ENCODE measurements at regions of chr4 and their contacts with region 1.

Region 1: GRCh38 chr4:102610007-102610406 is 108.8 kb downstream of the NFKB1 start:
- DNase-seq: no peak
- H3K4me3 ChIP-seq: no peak overlapping the region
- H3K4me3 Mint-ChIP-seq: peak overlapping the region in 5 of 8 donors; percentile 1 to 83 (median 44)
- H3K27ac ChIP-seq: no peak overlapping the region
- H3K27ac Mint-ChIP-seq: peak overlapping the region; percentile 18 to 99 (median 94)
- H3K4me1 ChIP-seq: peaks cover 84% of the 10 kb centered on the region
- H3K4me1 Mint-ChIP-seq: peaks cover 54 to 95% (median 76%) of the 10 kb centered on the region in 4 donors
- H3K27me3 ChIP-seq: no peaks in the 10 kb centered on the region
- H3K27me3 Mint-ChIP-seq: no peaks in the 10 kb centered on the region

Region 2: DNA sequence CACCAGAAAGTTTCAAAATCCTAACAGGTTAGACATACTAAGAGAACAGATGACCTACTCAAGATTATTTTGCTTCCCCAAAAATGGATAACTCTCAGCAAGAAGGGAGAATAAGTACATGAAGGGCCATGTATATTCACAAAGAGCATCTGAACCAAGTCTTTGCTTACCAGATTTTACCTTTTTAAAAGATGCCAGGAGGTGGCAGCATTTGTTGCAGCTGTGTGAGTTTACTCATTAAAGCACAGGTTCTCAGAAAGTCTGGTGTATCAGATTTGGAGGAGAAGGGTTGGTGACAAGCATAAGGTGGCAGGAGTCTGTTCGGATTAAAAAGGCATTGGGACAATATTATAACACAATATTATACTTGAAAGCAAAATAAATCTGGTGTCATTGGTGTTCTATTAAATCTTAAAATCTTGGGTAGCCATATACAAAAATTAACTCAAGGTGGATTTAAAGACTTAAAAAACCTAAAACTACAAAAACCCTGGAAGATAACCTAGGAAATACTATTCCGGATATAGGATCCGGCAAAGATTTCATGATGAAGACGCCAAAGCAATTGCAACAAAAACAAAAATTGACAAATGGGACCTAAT is 160.2 kb before region 1 on chr4:
- CTCF ChIA-PET with region 1: interaction called, 7 read pairs
- POLR2A ChIA-PET with region 1: no interaction called
- intact Hi-C with region 1: loop called (anchors 5 kb)
- DNase-seq: peak; percentile 67 to 75 (median 68)
- H3K4me3 ChIP-seq: no peak overlapping the region
- H3K4me3 Mint-ChIP-seq: no peak overlapping the region
- H3K27ac ChIP-seq: no peak overlapping the region
- H3K27ac Mint-ChIP-seq: no peak overlapping the region
- H3K4me1 ChIP-seq: peaks cover 12% of the 10 kb centered on the region
- H3K4me1 Mint-ChIP-seq: peaks cover 5 to 21% (median 9%) of the 10 kb centered on the region in 4 donors
- H3K27me3 ChIP-seq: no peaks in the 10 kb centered on the region
- H3K27me3 Mint-ChIP-seq: no peaks in the 10 kb centered on the region

Region 3: GRCh38 chr4:102578819-102579218 is 31.2 kb before region 1 on chr4:
- CTCF ChIA-PET with region 1: interaction called, 9 read pairs
- POLR2A ChIA-PET with region 1: interaction called, 6 read pairs
- intact Hi-C with region 1: loop called (anchors 5 kb)
- DNase-seq: peak in 2 of 5 donors; percentile 22 to 23
- H3K4me3 ChIP-seq: no peak overlapping the region
- H3K4me3 Mint-ChIP-seq: no peak overlapping the region
- H3K27ac ChIP-seq: no peak overlapping the region
- H3K27ac Mint-ChIP-seq: peak overlapping the region; percentile 31 to 77 (median 66)
- H3K4me1 ChIP-seq: peaks cover 42% of the 10 kb centered on the region
- H3K4me1 Mint-ChIP-seq: peaks cover 56 to 82% (median 63%) of the 10 kb centered on the region in 4 donors
- H3K27me3 ChIP-seq: no peaks in the 10 kb centered on the region
- H3K27me3 Mint-ChIP-seq: no peaks in the 10 kb centered on the region

Region 4: DNA sequence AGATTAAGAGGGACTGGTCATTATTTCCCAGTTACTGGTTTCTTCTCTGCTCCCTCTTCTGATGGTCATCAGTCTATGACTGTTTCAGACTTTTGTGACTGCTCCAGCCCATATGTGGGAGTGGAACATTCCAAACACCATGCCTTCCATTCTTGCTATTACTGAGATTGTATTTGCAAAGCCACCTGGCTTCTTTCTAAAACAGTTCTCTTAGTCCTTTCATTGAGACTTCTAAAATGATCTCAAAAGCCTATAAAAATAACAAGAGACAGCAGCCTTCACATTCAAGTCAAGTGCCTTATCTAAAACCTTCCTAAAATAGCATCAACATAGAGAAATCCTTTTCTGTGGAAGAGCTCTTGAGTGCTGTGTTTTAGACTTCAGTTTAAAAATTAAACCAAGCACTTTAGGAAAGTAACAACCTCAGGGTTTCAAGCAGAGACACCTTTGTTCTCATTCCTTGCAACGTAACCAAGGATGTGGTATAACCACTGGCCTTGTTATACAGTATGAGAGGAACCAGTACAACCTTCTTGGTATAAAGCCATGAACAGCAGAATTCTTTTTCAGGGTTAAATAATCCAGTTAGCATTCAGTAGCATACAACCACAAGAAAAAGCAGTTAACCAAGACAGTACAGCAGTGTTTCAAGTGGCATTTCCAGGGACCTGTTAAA is 11.8 kb before region 1 on chr4:
- CTCF ChIA-PET with region 1: interaction called, 22 read pairs
- POLR2A ChIA-PET with region 1: interaction called, 35 read pairs
- intact Hi-C with region 1: loop called (anchors 1 kb)
- DNase-seq: peak; percentile 62 to 83 (median 78)
- H3K4me3 ChIP-seq: no peak overlapping the region
- H3K4me3 Mint-ChIP-seq: peak overlapping the region; percentile 46 to 82 (median 68)
- H3K27ac ChIP-seq: peak overlapping the region; percentile 57
- H3K27ac Mint-ChIP-seq: peak overlapping the region; percentile 87 to 99 (median 92)
- H3K4me1 ChIP-seq: peaks cover 73% of the 10 kb centered on the region
- H3K4me1 Mint-ChIP-seq: peaks cover 54 to 88% (median 69%) of the 10 kb centered on the region in 4 donors
- H3K27me3 ChIP-seq: no peaks in the 10 kb centered on the region
- H3K27me3 Mint-ChIP-seq: no peaks in the 10 kb centered on the region

Region 5: DNA sequence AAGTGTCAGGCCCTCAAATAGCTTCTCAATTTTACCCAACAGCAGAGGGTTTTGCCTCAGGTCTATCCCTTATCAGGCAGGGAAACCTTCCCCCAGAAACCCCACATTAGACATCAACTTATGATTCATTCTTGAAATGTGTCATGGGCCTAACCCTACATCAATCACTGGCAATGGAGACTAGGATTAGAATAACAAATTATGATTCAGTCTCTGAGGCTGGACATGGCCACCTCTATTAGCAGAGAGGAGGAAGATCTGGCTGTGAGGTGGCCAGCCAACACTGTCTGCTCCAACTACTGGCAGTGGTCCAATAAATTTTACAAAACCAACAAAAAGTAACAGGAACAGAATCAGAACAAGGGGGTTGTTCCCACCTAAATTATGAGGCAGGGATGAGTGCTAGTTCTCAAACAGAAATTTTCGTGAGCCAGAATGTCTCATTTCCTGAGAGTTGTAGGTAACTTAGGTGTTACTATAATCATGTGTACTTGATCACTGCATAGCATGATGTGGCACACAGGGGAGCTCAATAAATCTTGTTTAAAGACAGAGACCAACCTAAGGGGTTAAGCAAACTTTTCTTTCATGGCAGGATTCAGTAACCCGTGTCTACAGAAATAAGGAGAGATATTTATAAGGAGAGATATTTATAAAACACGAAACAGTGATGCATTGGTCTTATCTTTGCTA is 18.0 kb after region 1 on chr4:
- CTCF ChIA-PET with region 1: interaction called, 8 read pairs
- POLR2A ChIA-PET with region 1: interaction called, 19 read pairs
- intact Hi-C with region 1: loop called (anchors 1 kb)
- DNase-seq: peak in 1 of 5 donors; percentile 49
- H3K4me3 ChIP-seq: no peak overlapping the region
- H3K4me3 Mint-ChIP-seq: peak overlapping the region in 4 of 8 donors; percentile 13 to 71 (median 38)
- H3K27ac ChIP-seq: no peak overlapping the region
- H3K27ac Mint-ChIP-seq: peak overlapping the region in 5 of 7 donors; percentile 35 to 93 (median 81)
- H3K4me1 ChIP-seq: peaks cover 66% of the 10 kb centered on the region
- H3K4me1 Mint-ChIP-seq: peaks cover 47 to 94% (median 65%) of the 10 kb centered on the region in 4 donors
- H3K27me3 ChIP-seq: no peaks in the 10 kb centered on the region
- H3K27me3 Mint-ChIP-seq: no peaks in the 10 kb centered on the region

Measured in CD4-positive, alpha-beta memory T cell (primary cell).